ENCODE measurements at regions of chr10 and their contacts with region 1.

Region 1: DNA sequence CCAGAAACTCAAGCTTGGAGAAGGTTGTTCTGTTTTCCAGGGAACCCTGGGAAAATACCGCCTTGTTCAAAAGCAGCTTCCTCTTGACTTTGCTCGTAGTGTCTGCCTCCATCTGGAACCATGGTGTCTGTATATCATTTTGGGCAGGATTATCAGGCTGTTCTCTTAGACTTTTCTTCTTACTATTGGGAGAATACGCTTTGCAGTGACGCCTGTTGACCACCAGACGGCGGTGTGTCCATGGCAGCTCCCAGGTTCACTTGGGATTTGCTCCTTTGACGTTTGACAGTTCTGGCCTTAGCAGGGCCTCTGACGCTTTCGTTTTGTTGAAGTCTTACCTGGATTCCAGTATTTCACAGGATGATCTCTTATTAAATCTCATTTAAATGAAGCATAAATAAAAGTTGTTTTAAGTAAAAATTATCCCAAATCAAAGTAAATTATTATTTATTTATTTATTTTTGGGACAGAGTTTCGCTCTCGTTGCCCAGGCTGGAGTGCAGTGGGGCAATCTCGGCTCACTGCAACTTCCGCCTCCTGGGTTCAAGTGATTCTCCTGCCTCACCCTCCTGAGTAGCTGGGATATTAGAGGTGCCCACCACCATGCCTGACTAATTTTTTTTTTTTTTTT is 41.8 kb upstream of the GJD4 start:
- DNase-seq: peak; percentile 76
- ATAC-seq: peak; percentile 64
- H3K4me3 ChIP-seq: no peak overlapping the region
- H3K27ac ChIP-seq: no peak overlapping the region
- H3K4me1 ChIP-seq: peaks cover 6% of the 10 kb centered on the region
- H3K27me3 ChIP-seq: no peaks in the 10 kb centered on the region
- CTCF ChIP-seq: peak; percentile 92
- POLR2A ChIP-seq: no peak
- RAD21 ChIP-seq: peak; percentile 83

Region 2: GRCh38 chr10:35103882-35104281 is 459.5 kb before region 1 on chr10:
- CTCF ChIA-PET with region 1: no interaction called
- POLR2A ChIA-PET with region 1: no interaction called
- dilution Hi-C with region 1: no loop called
- in situ Hi-C with region 1: loop called (anchors 25 kb)
- intact Hi-C with region 1: no loop called
- DNase-seq: no peak
- ATAC-seq: no peak
- H3K4me3 ChIP-seq: no peak overlapping the region
- H3K27ac ChIP-seq: no peak overlapping the region
- H3K4me1 ChIP-seq: no peaks in the 10 kb centered on the region
- H3K27me3 ChIP-seq: peaks cover 3% of the 10 kb centered on the region
- CTCF ChIP-seq: no peak
- POLR2A ChIP-seq: no peak
- RAD21 ChIP-seq: no peak

Region 3: DNA sequence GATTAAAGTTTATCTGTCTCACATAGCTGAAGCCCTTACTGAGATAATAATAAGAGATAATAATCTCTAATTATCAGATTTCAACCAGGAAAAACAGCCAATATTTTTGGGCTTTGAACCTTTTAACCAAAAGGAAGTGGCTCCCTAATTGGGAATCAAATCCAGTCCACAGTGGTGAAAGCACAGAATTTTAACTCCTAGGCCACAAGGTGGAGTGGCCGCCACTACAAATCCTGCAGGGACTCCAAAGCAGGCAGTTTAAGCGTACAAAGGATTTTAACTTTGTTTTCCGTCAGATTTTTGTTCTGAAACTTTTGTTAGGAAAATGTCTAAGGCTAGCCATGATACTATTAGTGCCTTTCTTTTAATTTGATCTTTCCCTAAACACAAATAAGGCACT is 326.6 kb before region 1 on chr10:
- CTCF ChIA-PET with region 1: no interaction called
- POLR2A ChIA-PET with region 1: no interaction called
- dilution Hi-C with region 1: no loop called
- in situ Hi-C with region 1: loop called (anchors 10 kb)
- intact Hi-C with region 1: loop called (anchors 10 kb)
- DNase-seq: peak; percentile 37
- ATAC-seq: peak; percentile 79
- H3K4me3 ChIP-seq: no peak overlapping the region
- H3K27ac ChIP-seq: no peak overlapping the region
- H3K4me1 ChIP-seq: no peaks in the 10 kb centered on the region
- H3K27me3 ChIP-seq: no peaks in the 10 kb centered on the region
- CTCF ChIP-seq: peak; percentile 48
- POLR2A ChIP-seq: no peak
- RAD21 ChIP-seq: peak; percentile 62

Region 4: DNA sequence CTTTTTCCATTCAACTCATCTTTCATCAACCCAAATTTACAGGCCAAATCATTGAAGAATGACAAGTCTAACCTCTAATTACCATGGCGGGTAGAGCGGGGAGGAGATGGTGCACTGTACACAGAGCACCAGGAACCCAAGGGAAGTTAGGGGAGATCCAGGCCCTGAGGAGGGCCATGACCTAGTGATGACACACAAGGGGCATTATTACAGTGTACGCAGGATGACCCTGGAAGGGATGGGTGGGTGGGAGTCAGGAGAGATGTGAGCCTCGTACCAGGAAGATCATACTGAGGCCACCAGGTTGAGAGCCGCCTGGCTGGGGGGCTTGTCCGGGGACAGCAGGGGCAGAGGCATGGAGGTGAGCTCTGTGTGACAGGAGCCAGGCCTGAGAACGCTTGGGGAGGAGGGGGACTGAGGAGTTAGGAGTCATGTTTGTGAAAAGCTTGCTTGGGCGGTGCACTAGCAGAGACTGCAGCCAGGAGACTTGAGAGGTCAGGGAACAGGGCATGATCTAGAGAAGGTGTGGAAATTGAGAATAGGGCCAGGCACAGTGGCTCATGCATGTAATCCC is 316.5 kb before region 1 on chr10:
- CTCF ChIA-PET with region 1: no interaction called
- POLR2A ChIA-PET with region 1: no interaction called
- dilution Hi-C with region 1: no loop called
- in situ Hi-C with region 1: no loop called
- intact Hi-C with region 1: loop called (anchors 10 kb)
- DNase-seq: no peak
- ATAC-seq: no peak
- H3K4me3 ChIP-seq: no peak overlapping the region
- H3K27ac ChIP-seq: no peak overlapping the region
- H3K4me1 ChIP-seq: peaks cover 3% of the 10 kb centered on the region; the same call in 1 of the 2 replicates
- H3K27me3 ChIP-seq: no peaks in the 10 kb centered on the region
- CTCF ChIP-seq: no peak
- POLR2A ChIP-seq: no peak
- RAD21 ChIP-seq: no peak

Region 5: GRCh38 chr10:35585903-35586535 is 22.6 kb after region 1 on chr10:
- CTCF ChIA-PET with region 1: no interaction called
- POLR2A ChIA-PET with region 1: no interaction called
- dilution Hi-C with region 1: no loop called
- in situ Hi-C with region 1: no loop called
- intact Hi-C with region 1: no loop called
- DNase-seq: no peak
- ATAC-seq: no peak
- H3K4me3 ChIP-seq: no peak overlapping the region
- H3K27ac ChIP-seq: no peak overlapping the region
- H3K4me1 ChIP-seq: no peaks in the 10 kb centered on the region
- H3K27me3 ChIP-seq: peaks cover 27% of the 10 kb centered on the region
- CTCF ChIP-seq: no peak
- POLR2A ChIP-seq: no peak
- RAD21 ChIP-seq: no peak